ENCODE measurements at regions of chr17 and their contacts with region 1.

Region 1: DNA sequence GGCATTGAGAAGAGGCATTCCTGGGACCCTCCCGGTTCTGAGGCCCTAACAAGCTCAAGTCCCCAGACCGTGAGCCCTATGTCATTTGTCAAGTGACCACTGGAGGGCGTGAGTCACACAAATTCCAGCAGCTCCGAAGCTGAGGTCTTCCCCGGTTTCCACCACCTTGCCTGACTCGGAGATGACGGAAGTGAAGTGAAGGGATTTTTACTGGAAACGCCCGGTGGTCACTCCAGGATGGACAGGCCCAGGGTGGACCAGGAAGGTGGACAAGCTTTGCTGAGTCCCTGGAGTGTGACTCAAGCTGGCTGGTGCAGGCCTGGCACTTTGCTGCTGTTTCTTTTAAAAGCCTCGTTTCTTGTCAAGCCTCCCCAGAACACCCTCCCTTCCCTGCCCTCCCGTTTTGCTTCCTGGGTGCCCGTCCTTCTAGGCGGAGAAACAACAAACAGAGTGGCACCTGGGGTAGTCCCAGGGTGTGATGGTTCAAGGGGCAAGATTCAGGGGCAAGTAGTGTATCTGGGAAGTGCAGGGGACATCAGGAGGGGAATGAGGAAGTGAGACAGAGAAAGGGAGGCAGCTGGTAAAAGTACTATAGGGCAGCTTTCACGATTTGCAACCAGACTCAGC is 5.3 kb upstream of the NOS2 start:
- DNase-seq: peak; percentile 83
- ATAC-seq: peak; percentile 98
- H3K4me3 ChIP-seq: peak overlapping the region; percentile 19 to 43
- H3K27ac ChIP-seq: no peak overlapping the region
- H3K4me1 ChIP-seq: peaks cover 6 to 8% of the 10 kb centered on the region in 2 experiments
- H3K27me3 ChIP-seq: no peaks in the 10 kb centered on the region
- CTCF ChIP-seq: peak; percentile 62 to 87 (median 85); a peak in 5 of 6 replicates
- POLR2A ChIP-seq: no peak
- RAD21 ChIP-seq: peak; percentile 82

Region 2: GRCh38 chr17:27471321-27472269 is 334.0 kb before region 1 on chr17:
- CTCF ChIA-PET with region 1: no interaction called
- POLR2A ChIA-PET with region 1: no interaction called
- RAD21 ChIA-PET with region 1: no interaction called
- intact Hi-C with region 1: no loop called
- DNase-seq: peak; percentile 41
- ATAC-seq: peak; percentile 73
- H3K4me3 ChIP-seq: peak overlapping the region in 1 of 2 experiments; percentile 13; a peak in 1 of 4 replicates
- H3K27ac ChIP-seq: peak overlapping the region; percentile 21; the same call in 1 of the 2 replicates
- H3K4me1 ChIP-seq: peaks cover 24 to 39% of the 10 kb centered on the region in 2 experiments
- H3K27me3 ChIP-seq: no peaks in the 10 kb centered on the region
- CTCF ChIP-seq: no peak
- POLR2A ChIP-seq: no peak
- RAD21 ChIP-seq: no peak

Region 3: GRCh38 chr17:27793168-27793905 is 12.3 kb before region 1 on chr17:
- CTCF ChIA-PET with region 1: interaction called, 14 read pairs
- POLR2A ChIA-PET with region 1: interaction called, 4 read pairs
- RAD21 ChIA-PET with region 1: no interaction called
- intact Hi-C with region 1: no loop called
- DNase-seq: no peak
- ATAC-seq: no peak
- H3K4me3 ChIP-seq: no peak overlapping the region
- H3K27ac ChIP-seq: no peak overlapping the region
- H3K4me1 ChIP-seq: peaks cover 0 to 11% of the 10 kb centered on the region in 2 experiments; a peak in 1 of 4 replicates
- H3K27me3 ChIP-seq: no peaks in the 10 kb centered on the region
- CTCF ChIP-seq: no peak
- POLR2A ChIP-seq: no peak
- RAD21 ChIP-seq: no peak

Region 4: DNA sequence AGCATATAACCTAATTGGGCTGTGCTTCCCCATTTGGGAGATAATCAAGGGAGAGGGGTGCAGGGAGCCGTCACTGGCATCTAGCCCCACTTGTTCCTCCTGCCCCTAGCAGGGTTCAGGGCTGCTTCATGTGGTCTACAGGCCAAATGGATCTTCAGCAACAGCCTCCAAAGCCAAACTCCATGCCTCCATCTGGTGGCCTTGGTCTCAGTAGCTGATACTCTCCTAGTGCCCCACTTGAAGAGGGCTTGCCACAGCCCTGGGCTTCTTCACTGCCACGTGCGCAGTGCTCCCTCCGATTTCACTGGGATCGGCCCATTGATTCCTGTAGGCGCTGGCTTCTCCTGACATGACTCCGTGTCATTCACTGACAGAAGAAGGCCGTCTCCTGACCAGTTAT is 62.9 kb after region 1 on chr17:
- CTCF ChIA-PET with region 1: interaction called, 11 read pairs
- POLR2A ChIA-PET with region 1: no interaction called
- RAD21 ChIA-PET with region 1: no interaction called
- intact Hi-C with region 1: no loop called
- DNase-seq: no peak
- ATAC-seq: no peak
- H3K4me3 ChIP-seq: no peak overlapping the region
- H3K27ac ChIP-seq: no peak overlapping the region
- H3K4me1 ChIP-seq: no peaks in the 10 kb centered on the region
- H3K27me3 ChIP-seq: no peaks in the 10 kb centered on the region
- CTCF ChIP-seq: no peak
- POLR2A ChIP-seq: no peak
- RAD21 ChIP-seq: 0 out of 2 replicates have a peak, but pooled peaks have one; percentile 11

Region 5: GRCh38 chr17:27879987-27880608 is 74.5 kb after region 1 on chr17:
- CTCF ChIA-PET with region 1: interaction called, 92 read pairs
- POLR2A ChIA-PET with region 1: interaction called, 5 read pairs
- RAD21 ChIA-PET with region 1: interaction called, 16 to 25 read pairs
- intact Hi-C with region 1: loop called (anchors 2 kb)
- DNase-seq: no peak
- ATAC-seq: peak; percentile 99
- H3K4me3 ChIP-seq: no peak overlapping the region
- H3K27ac ChIP-seq: no peak overlapping the region
- H3K4me1 ChIP-seq: no peaks in the 10 kb centered on the region
- H3K27me3 ChIP-seq: no peaks in the 10 kb centered on the region
- CTCF ChIP-seq: peak; percentile 83 to 92 (median 85)
- POLR2A ChIP-seq: no peak
- RAD21 ChIP-seq: peak; percentile 88

Region 6: GRCh38 chr17:27892866-27893769 is 87.5 kb after region 1 on chr17 and contains the start of gene LYRM9:
- CTCF ChIA-PET with region 1: interaction called, 13 read pairs
- POLR2A ChIA-PET with region 1: no interaction called
- RAD21 ChIA-PET with region 1: interaction called in 1 of 2 experiments, 7 read pairs
- intact Hi-C with region 1: no loop called
- DNase-seq: peak; percentile 66
- ATAC-seq: peak; percentile 97
- H3K4me3 ChIP-seq: peak within 1 kb of the TSS; percentile 56 to 67
- H3K27ac ChIP-seq: peak within 1 kb of the TSS; percentile 39; the same call in 1 of the 2 replicates
- H3K4me1 ChIP-seq: peaks cover 25 to 28% of the 10 kb centered on the region in 2 experiments; a peak in 3 of 4 replicates
- H3K27me3 ChIP-seq: no peaks in the 10 kb centered on the region
- CTCF ChIP-seq: peak; percentile 22 to 81 (median 80); a peak in 4 of 6 replicates
- POLR2A ChIP-seq: no peak
- RAD21 ChIP-seq: peak; percentile 48
- total RNA-seq, gene LYRM9: 4.8 TPM

Region 7: GRCh38 chr17:28457890-28458289 is 652.3 kb after region 1 on chr17:
- CTCF ChIA-PET with region 1: no interaction called
- POLR2A ChIA-PET with region 1: no interaction called
- RAD21 ChIA-PET with region 1: no interaction called
- intact Hi-C with region 1: no loop called
- DNase-seq: no peak
- ATAC-seq: no peak
- H3K4me3 ChIP-seq: no peak overlapping the region
- H3K27ac ChIP-seq: no peak overlapping the region
- H3K4me1 ChIP-seq: no peaks in the 10 kb centered on the region
- H3K27me3 ChIP-seq: no peaks in the 10 kb centered on the region
- CTCF ChIP-seq: no peak
- POLR2A ChIP-seq: no peak
- RAD21 ChIP-seq: no peak